Activated B cell treated with CpG ODN at 0.5 μM for 24 hours (primary cell): ENCODE measurements at regions of chr1 and their contacts with region 1.

Region 1: GRCh38 chr1:225441314-225442122 is 13.7 kb upstream of the LBR start:
- DNase-seq: no peak
- ATAC-seq: no peak
- H3K4me3 Mint-ChIP-seq: peak overlapping the region; percentile 25
- H3K27ac Mint-ChIP-seq: peak overlapping the region; percentile 78
- H3K4me1 Mint-ChIP-seq: peaks cover 69% of the 10 kb centered on the region
- H3K27me3 Mint-ChIP-seq: no peaks in the 10 kb centered on the region
- CTCF ChIP-seq: no peak

Region 2: DNA sequence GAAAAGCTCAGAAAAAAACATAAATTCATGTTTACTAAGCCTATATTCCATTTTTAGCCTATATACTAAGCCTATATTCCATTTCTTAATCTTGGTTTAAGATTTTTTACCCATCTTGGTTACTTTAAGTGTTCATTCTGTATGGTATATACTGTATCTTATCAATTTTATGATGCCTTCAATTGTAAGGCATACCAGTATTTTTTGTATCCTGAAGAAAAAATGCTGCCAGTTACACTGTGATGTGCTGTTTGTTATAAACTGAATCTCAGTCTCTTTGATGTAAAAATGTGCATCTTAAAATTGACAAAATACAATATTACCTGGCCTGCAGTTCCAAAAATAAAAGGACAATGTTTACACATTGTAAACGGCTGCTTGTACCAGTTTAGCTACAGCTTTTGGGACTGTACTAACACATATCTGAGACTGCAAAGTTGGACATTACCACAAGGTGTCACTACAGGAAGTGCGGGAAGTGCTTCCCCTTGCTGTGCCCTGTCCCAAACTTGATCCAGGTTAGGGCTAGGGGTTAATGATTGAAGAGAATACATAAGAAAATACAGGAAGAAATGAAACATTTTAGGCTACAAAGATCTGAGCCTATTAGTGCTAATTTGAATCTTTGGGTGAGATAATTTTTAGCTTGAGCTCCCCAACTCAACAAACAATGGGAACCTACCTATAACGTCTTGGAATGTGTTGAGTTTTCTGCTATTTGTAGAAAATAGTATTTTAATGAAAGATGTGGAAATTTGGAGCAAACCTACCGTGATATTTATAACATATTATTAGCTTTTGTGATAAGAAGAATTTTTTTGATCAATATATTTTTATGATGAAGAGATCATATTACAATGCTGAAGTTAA is 122.6 kb before region 1 on chr1:
- CTCF ChIA-PET with region 1: interaction called, 12 read pairs
- POLR2A ChIA-PET with region 1: interaction called, 4 read pairs
- intact Hi-C with region 1: loop called (anchors 10 kb)
- DNase-seq: no peak
- ATAC-seq: peak; percentile 50
- H3K4me3 Mint-ChIP-seq: no peak overlapping the region
- H3K27ac Mint-ChIP-seq: no peak overlapping the region
- H3K4me1 Mint-ChIP-seq: no peaks in the 10 kb centered on the region
- H3K27me3 Mint-ChIP-seq: peaks cover 10% of the 10 kb centered on the region
- CTCF ChIP-seq: no peak

Region 3: GRCh38 chr1:225413708-225414375 is 27.7 kb before region 1 on chr1:
- CTCF ChIA-PET with region 1: no interaction called
- POLR2A ChIA-PET with region 1: interaction called, 7 read pairs
- intact Hi-C with region 1: loop called (anchors 2 kb)
- DNase-seq: no peak
- ATAC-seq: peak; percentile 25
- H3K4me3 Mint-ChIP-seq: no peak overlapping the region
- H3K27ac Mint-ChIP-seq: peak overlapping the region; percentile 31
- H3K4me1 Mint-ChIP-seq: peaks cover 12% of the 10 kb centered on the region
- H3K27me3 Mint-ChIP-seq: no peaks in the 10 kb centered on the region
- CTCF ChIP-seq: no peak

Region 4: GRCh38 chr1:225428068-225428880 is 13.2 kb before region 1 on chr1:
- CTCF ChIA-PET with region 1: interaction called, 14 read pairs
- POLR2A ChIA-PET with region 1: interaction called, 113 read pairs
- intact Hi-C with region 1: loop called (anchors 1 kb)
- DNase-seq: peak; percentile 88
- ATAC-seq: peak; percentile 92
- H3K4me3 Mint-ChIP-seq: peak overlapping the region; percentile 89
- H3K27ac Mint-ChIP-seq: peak overlapping the region; percentile 90
- H3K4me1 Mint-ChIP-seq: peaks cover 48% of the 10 kb centered on the region
- H3K27me3 Mint-ChIP-seq: no peaks in the 10 kb centered on the region
- CTCF ChIP-seq: no peak

Region 5: GRCh38 chr1:225460021-225460736 is 18.7 kb after region 1 on chr1:
- CTCF ChIA-PET with region 1: interaction called, 3 read pairs
- POLR2A ChIA-PET with region 1: interaction called, 15 read pairs
- intact Hi-C with region 1: no loop called
- DNase-seq: no peak
- ATAC-seq: no peak
- H3K4me3 Mint-ChIP-seq: no peak overlapping the region
- H3K27ac Mint-ChIP-seq: no peak overlapping the region
- H3K4me1 Mint-ChIP-seq: peaks cover 5% of the 10 kb centered on the region
- H3K27me3 Mint-ChIP-seq: no peaks in the 10 kb centered on the region
- CTCF ChIP-seq: no peak

Region 6: GRCh38 chr1:225467193-225468020 is 25.9 kb after region 1 on chr1:
- CTCF ChIA-PET with region 1: interaction called, 21 read pairs
- POLR2A ChIA-PET with region 1: interaction called, 168 read pairs
- intact Hi-C with region 1: loop called (anchors 1 kb)
- DNase-seq: peak; percentile 75
- ATAC-seq: peak; percentile 86
- H3K4me3 Mint-ChIP-seq: peak overlapping the region; percentile 90
- H3K27ac Mint-ChIP-seq: peak overlapping the region; percentile 98
- H3K4me1 Mint-ChIP-seq: peaks cover 40% of the 10 kb centered on the region
- H3K27me3 Mint-ChIP-seq: no peaks in the 10 kb centered on the region
- CTCF ChIP-seq: no peak

Region 7: DNA sequence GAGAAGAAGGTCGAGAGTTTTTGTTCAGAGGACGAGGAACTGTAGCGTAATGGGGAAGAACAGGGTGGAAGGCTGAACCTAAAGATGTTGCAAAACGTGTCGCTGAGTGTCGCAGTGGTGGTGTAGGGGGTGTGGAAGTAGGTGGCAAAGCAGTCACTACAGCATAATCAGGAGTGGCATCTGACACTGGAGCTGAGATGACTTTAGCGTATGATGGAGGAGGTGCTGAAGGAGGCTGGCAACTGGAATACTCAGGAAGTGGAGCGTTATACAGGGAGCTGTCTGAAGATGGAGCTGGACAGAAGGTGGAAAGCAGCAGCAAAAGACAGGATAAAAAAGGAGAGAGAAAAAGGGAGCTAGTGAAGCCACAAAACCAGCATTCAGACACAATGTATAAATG is 76.2 kb after region 1 on chr1:
- CTCF ChIA-PET with region 1: no interaction called
- POLR2A ChIA-PET with region 1: no interaction called
- intact Hi-C with region 1: no loop called
- DNase-seq: no peak
- ATAC-seq: no peak
- H3K4me3 Mint-ChIP-seq: no peak overlapping the region
- H3K27ac Mint-ChIP-seq: no peak overlapping the region
- H3K4me1 Mint-ChIP-seq: no peaks in the 10 kb centered on the region
- H3K27me3 Mint-ChIP-seq: peaks cover 10% of the 10 kb centered on the region
- CTCF ChIP-seq: no peak